OCI-LY7 (cell line): ENCODE measurements at regions of chr1 and their contacts with region 1.

Region 1: GRCh38 chr1:175471039-175471800 is 272.2 kb downstream of the TNR start:
- DNase-seq: no peak
- H3K4me3 ChIP-seq: no peak overlapping the region
- H3K27ac ChIP-seq: no peak overlapping the region
- H3K4me1 ChIP-seq: no peaks in the 10 kb centered on the region
- CTCF ChIP-seq: no peak

Region 2: GRCh38 chr1:175343945-175344344 is 127.3 kb before region 1 on chr1:
- CTCF ChIA-PET with region 1: no interaction called
- POLR2A ChIA-PET with region 1: no interaction called
- intact Hi-C with region 1: no loop called
- DNase-seq: no peak
- H3K4me3 ChIP-seq: no peak overlapping the region
- H3K27ac ChIP-seq: no peak overlapping the region
- H3K4me1 ChIP-seq: no peaks in the 10 kb centered on the region
- CTCF ChIP-seq: no peak

Region 3: DNA sequence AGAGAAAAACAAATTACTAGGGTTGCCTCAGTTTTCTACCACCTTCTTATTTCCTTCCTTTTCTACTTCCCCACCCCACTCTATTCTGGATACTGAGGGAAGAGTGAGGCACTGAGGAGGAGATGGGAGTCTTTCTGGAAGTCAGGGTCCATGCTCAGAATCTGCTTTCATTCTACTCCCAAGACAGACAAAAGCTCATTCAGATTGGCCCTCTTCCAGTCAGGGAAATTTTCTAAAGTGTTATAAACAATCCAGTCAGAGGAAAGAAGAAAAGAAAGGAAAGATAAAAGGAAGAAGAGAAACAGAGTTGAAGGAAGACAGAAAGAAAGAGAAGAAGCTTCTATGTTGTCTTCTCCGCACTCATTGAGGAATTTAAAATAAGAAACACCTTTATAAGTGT is 507.3 kb after region 1 on chr1:
- CTCF ChIA-PET with region 1: no interaction called
- POLR2A ChIA-PET with region 1: interaction called, 10 read pairs
- intact Hi-C with region 1: no loop called
- DNase-seq: no peak
- H3K4me3 ChIP-seq: no peak overlapping the region
- H3K27ac ChIP-seq: no peak overlapping the region
- H3K4me1 ChIP-seq: no peaks in the 10 kb centered on the region
- CTCF ChIP-seq: no peak